Esophagus muscularis mucosa (tissue), 4 donors: ENCODE measurements at regions of chr18 and their contacts with region 1.

Region 1: DNA sequence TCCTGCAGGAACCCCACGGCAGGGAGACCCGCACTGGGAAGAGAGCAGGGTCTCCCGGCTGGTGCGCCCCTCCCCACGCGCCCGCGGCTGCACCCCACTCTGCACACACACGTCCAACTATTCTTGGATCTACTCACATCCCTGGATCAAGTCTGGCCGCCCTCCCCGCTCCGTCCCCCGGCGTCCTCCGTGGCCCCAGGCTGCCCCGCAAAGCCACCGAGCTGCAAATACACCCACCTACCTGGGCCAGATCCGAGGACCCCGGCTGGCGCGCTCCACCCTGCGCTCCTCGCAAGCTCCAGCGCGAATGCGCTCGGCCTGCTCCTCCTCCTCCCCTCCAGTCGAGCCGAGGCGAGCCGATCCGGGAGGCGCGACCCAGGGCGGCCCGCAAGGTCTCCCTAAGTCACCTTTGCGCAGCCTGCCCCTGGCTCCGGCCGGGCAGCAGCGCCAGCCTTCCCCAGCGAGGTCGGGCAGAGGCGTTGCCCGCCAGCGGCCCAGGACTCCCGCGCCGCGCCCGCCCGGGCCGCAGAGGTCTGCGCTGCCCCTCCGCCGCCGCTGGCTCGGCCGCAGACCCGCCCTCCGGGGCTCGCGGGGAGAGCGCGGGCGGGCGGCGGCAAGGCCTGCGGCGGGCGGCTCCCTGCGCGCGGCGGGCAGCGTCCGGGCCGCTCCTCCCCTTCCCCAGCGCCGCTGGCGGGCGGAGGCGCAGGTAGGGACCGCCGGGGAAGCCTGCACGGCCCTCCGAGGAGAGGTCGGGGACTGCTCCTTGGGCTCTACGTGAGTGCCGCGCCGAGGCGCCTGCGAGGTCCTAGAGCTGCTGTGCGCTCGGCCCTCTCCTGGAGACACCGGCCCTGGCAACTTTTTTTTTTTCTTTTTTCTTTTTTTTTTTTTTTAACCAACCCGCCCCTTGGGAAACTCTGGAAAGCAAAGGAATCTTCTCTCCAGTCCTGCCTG is 126.0 kb downstream of the OSBPL1A start:
- DNase-seq: no peak
- H3K4me3 ChIP-seq: peak overlapping the region; percentile 87 to 89 (median 88)
- H3K27ac ChIP-seq: peak overlapping the region; percentile 91 to 94 (median 93)
- H3K4me1 ChIP-seq: peaks cover 21 to 57% (median 53%) of the 10 kb centered on the region in 4 donors
- H3K27me3 ChIP-seq: no peaks in the 10 kb centered on the region
- CTCF ChIP-seq: peak in 2 of 3 experiments; percentile 8 to 44
- EP300 ChIP-seq: no peak
- POLR2A ChIP-seq: no peak

Region 2: GRCh38 chr18:24176727-24177416 is 94.8 kb before region 1 on chr18:
- intact Hi-C with region 1: loop called (anchors 5 kb)
- DNase-seq: no peak
- H3K4me3 ChIP-seq: no peak overlapping the region
- H3K27ac ChIP-seq: no peak overlapping the region
- H3K4me1 ChIP-seq: peaks cover 4 to 12% (median 8%) of the 10 kb centered on the region in 4 donors
- H3K27me3 ChIP-seq: no peaks in the 10 kb centered on the region
- CTCF ChIP-seq: peak; percentile 59 to 78 (median 72)
- EP300 ChIP-seq: no peak
- POLR2A ChIP-seq: no peak

Region 3: GRCh38 chr18:24212939-24213338 is 58.7 kb before region 1 on chr18:
- intact Hi-C with region 1: loop called (anchors 5 kb)
- DNase-seq: no peak
- H3K4me3 ChIP-seq: no peak overlapping the region
- H3K27ac ChIP-seq: peak overlapping the region; percentile 61 to 76 (median 75)
- H3K4me1 ChIP-seq: peaks cover 28 to 71% (median 47%) of the 10 kb centered on the region in 4 donors
- H3K27me3 ChIP-seq: no peaks in the 10 kb centered on the region
- CTCF ChIP-seq: no peak
- EP300 ChIP-seq: no peak
- POLR2A ChIP-seq: no peak

Region 4: GRCh38 chr18:24227977-24228666 is 43.5 kb before region 1 on chr18:
- intact Hi-C with region 1: loop called (anchors 5 kb)
- DNase-seq: no peak
- H3K4me3 ChIP-seq: no peak overlapping the region
- H3K27ac ChIP-seq: no peak overlapping the region
- H3K4me1 ChIP-seq: peaks cover 38 to 73% (median 48%) of the 10 kb centered on the region in 4 donors
- H3K27me3 ChIP-seq: no peaks in the 10 kb centered on the region
- CTCF ChIP-seq: no peak
- EP300 ChIP-seq: no peak
- POLR2A ChIP-seq: no peak

Region 5: GRCh38 chr18:24388957-24389356 is 117.3 kb after region 1 on chr18:
- intact Hi-C with region 1: no loop called
- DNase-seq: no peak
- H3K4me3 ChIP-seq: no peak overlapping the region
- H3K27ac ChIP-seq: no peak overlapping the region
- H3K4me1 ChIP-seq: no peaks in the 10 kb centered on the region
- H3K27me3 ChIP-seq: no peaks in the 10 kb centered on the region
- CTCF ChIP-seq: no peak
- EP300 ChIP-seq: no peak
- POLR2A ChIP-seq: no peak